Heart right ventricle (tissue), 16 donors: ENCODE measurements at regions of chr9 and their contacts with region 1.

Region 1: DNA sequence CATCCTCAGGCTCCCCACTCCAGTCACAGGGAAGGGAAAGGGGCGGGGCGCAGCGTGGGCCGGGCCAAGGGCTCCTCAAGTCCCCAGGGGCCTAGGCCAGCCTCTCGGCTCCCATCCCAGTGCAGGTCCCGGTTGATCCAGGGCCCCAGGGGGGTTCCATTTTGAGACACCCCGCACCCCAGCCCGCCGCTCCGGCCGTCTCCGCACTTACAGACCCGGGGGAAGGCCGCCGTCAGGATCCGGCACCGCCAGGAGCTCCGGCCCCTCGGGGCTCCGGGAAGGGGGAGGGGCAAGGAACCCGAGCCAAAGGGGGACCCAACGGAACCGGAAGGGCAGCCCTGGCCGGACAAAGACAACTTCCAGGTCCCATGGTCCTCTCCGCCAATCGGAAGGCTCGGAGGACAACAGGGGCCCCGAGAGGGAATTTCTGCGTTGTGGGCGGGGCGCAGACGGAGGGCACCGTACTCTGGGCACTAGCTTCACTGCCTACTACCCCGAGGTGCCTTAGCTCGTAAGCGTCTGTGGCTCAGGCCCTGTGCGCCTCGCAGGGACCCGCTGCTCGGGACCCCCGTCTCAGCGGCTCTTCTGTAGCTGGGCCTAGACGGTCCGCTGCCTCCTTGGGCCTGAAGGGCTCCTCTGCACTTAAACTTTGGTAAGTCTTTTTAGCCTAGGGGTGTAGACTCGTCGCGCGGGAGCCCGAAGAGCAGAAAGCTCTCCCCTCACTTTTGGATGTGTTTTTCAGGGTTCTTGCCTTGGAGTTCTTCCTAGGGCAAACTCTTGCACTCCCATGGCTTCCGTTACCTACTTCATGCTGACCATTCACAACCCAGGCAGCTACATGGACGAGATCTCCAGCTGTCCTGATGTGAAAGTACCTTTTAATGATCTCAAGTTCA is at the start of gene ZBTB26:
- DNase-seq: peak; percentile 93 to 96
- ATAC-seq: peak; percentile 98 to 99 (median 98)
- H3K4me3 ChIP-seq: peak within 1 kb of the TSS; percentile 62 to 94 (median 84)
- H3K27ac ChIP-seq: peak within 1 kb of the TSS; percentile 36 to 96 (median 90)
- H3K4me1 ChIP-seq: peaks cover 3 to 41% (median 32%) of the 10 kb centered on the region in 9 donors
- H3K27me3 ChIP-seq: no peaks in the 10 kb centered on the region
- CTCF ChIP-seq: no peak
- total RNA-seq, gene ZBTB26: 3.0 to 5.5 (median 4.5) TPM

Region 2: GRCh38 chr9:122857815-122858214 is 73.7 kb before region 1 on chr9:
- intact Hi-C with region 1: no loop called
- DNase-seq: no peak
- ATAC-seq: no peak
- H3K4me3 ChIP-seq: no peak overlapping the region
- H3K27ac ChIP-seq: no peak overlapping the region
- H3K4me1 ChIP-seq: no peaks in the 10 kb centered on the region
- H3K27me3 ChIP-seq: no peaks in the 10 kb centered on the region
- CTCF ChIP-seq: no peak

Region 3: GRCh38 chr9:122978601-122979000 is 47.1 kb after region 1 on chr9:
- intact Hi-C with region 1: loop called in 1 of 10 experiments (anchors 5 kb)
- DNase-seq: no peak
- ATAC-seq: no peak
- H3K4me3 ChIP-seq: no peak overlapping the region
- H3K27ac ChIP-seq: no peak overlapping the region
- H3K4me1 ChIP-seq: peaks cover 0 to 36% (median 21%) of the 10 kb centered on the region in 9 donors
- H3K27me3 ChIP-seq: no peaks in the 10 kb centered on the region
- CTCF ChIP-seq: no peak

Region 4: DNA sequence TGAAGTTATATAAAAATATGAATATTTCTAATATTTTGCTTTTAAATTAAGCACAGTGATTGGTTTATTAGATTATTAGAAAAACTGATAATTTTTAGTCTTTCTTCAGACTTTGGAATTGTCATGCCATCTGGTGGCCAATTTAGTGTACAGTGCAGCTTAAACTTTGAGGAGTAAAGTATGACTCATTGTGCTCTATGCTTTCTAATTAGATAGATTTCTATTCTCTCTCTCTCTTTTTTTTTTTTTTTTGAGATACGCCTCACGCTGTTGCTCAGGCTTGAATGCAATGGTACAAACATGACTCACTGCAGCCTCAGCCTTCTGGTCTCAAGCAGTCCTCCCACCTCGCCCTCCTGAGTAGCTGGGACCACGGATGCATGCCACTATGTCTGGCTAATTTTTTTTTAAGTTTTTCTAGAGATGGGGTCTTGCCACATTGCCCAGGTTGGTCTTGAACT is 59.9 kb after region 1 on chr9:
- intact Hi-C with region 1: no loop called
- DNase-seq: peak in 1 of 2 donors; percentile 28
- ATAC-seq: peak in 7 of 8 donors; percentile 44 to 85 (median 61)
- H3K4me3 ChIP-seq: no peak overlapping the region
- H3K27ac ChIP-seq: no peak overlapping the region
- H3K4me1 ChIP-seq: peaks cover 0 to 8% (median 0%) of the 10 kb centered on the region in 9 donors
- H3K27me3 ChIP-seq: no peaks in the 10 kb centered on the region
- CTCF ChIP-seq: peak; percentile 47 to 84 (median 73)